GM23248 (cell line): ENCODE measurements at regions of chr2 and their contacts with region 1.

Region 1: GRCh38 chr2:188524519-188525113 is 232.9 kb downstream of the GULP1 start:
- DNase-seq: peak; percentile 76
- H3K4me3 ChIP-seq: no peak overlapping the region
- H3K27ac ChIP-seq: no peak overlapping the region
- H3K4me1 ChIP-seq: peaks cover 29% of the 10 kb centered on the region
- H3K27me3 ChIP-seq: no peaks in the 10 kb centered on the region

Region 2: DNA sequence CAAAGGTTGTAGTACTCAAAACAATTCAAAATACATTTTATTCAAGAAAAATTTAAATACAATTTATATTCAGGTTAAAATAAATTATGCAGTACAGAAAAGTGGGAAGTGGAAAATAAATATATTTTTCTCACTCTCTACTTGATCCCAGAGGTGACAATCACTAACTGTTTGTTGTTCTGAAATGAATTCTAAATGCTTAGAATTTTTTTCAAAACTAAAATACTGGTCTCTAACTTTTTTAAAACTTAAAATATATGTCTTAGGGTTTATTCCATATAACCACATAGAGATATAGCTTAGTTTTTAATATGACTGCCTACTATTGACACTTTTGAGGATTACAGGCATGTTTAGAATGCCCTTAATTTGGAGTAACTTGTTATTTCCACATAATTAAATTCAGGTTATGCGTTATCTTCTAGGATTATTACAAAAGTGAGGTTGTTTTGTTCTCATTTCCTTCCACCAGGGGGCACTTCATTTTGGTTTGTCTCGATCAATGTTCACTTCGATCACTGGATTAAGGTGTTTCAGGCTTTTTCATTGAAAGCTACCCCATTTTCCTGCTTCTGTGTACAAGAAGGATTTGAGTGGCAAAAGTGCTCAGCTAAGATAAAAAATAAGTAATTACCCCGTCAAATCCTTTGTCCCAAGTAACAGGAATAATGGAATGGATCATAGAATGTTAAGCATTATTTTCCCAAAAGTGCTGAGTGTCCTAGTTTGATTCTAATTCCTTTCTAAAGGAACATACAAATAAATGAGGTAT is 943.3 kb before region 1 on chr2:
- in situ Hi-C with region 1: loop called (anchors 25 kb)
- DNase-seq: peak; percentile 58
- H3K4me3 ChIP-seq: peak overlapping the region; percentile 58
- H3K27ac ChIP-seq: 0 out of 2 replicates have a peak overlapping the region, but pooled peaks have one; percentile 4
- H3K4me1 ChIP-seq: peaks cover 17% of the 10 kb centered on the region
- H3K27me3 ChIP-seq: no peaks in the 10 kb centered on the region

Region 3: GRCh38 chr2:188978291-188979081 is 453.9 kb after region 1 on chr2:
- in situ Hi-C with region 1: loop called (anchors 5 kb)
- DNase-seq: peak; percentile 83
- H3K4me3 ChIP-seq: peak overlapping the region; percentile 85
- H3K27ac ChIP-seq: peak overlapping the region; percentile 89
- H3K4me1 ChIP-seq: peaks cover 61% of the 10 kb centered on the region
- H3K27me3 ChIP-seq: no peaks in the 10 kb centered on the region

Region 4: GRCh38 chr2:189412330-189412953 is 887.8 kb after region 1 on chr2:
- in situ Hi-C with region 1: loop called (anchors 25 kb)
- DNase-seq: peak; percentile 65
- H3K4me3 ChIP-seq: peak overlapping the region; percentile 52
- H3K27ac ChIP-seq: peak overlapping the region; percentile 76
- H3K4me1 ChIP-seq: peaks cover 39% of the 10 kb centered on the region
- H3K27me3 ChIP-seq: no peaks in the 10 kb centered on the region